ENCODE measurements at regions of chr5 and their contacts with region 1.

Region 1: DNA sequence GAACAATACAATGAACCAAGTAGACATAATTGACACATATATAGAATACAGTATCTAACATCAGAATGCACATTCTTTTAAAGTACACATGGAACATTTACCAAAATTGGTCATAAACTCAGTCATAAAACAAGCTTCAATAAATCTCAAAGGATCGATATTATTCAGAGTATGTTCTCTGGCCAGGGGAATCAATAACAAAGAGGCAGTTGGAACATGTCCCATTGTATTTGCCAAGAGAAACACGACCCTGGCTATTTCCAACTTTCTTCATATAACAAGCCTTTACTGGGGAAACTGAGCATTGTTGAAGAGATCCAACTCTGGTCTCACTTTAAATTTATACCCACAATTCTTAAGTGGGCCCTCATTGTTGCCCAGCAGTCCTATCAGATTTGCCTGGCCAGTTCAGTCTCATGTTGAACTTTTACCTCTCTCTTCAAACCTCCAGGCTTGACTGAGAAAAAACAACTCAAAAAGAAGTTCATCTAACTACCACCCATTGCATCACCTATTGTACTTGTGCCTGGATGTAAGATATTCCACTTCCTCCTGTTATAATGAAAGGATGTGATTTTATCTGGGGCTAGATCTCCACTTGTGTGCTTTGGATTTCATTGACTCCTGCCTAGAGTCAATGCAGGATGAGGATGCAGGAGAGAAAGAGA is 162.5 kb downstream of the HSPA4 start:
- DNase-seq: no peak
- H3K4me3 ChIP-seq: no peak overlapping the region
- H3K27ac ChIP-seq: no peak overlapping the region
- H3K4me1 ChIP-seq: no peaks in the 10 kb centered on the region
- H3K27me3 ChIP-seq: no peaks in the 10 kb centered on the region
- CTCF ChIP-seq: no peak

Region 2: DNA sequence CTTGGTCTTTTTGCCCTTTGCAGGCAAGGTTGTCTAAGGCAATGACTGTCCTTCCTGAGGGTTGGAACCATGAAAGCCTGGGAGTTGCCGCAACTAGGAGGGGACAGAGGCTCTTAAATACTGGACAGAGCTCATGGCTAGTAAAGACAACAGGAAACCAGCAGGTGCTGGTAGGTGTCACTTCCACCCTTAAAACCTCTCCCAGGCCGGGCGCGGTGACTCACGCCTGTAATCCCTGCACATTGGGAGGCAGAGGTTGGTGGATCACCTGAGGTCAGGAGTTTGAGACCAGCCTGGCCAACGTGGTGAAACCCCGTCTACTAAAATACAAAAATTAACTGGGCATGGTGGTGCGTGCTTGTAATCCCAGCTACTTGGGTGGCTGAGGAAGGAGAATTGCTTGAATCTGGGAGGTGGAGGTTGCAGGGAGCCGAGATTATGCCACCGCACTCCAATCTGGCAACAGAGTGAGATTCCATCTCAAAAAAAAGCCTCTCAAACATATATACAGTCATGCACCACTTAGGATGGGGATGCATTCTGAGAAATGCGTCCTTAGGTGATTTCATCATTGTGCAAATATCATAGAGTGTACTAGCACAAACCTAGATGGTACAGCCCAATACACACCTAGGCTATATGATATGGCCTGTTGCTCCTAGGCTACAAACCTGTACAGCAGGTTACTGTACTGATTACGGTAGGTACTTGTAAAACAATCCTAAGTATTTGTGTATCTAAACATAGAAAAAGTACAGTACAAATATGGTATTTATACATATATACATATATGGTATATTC is 59.8 kb before region 1 on chr5:
- CTCF ChIA-PET with region 1: no interaction called
- dilution Hi-C with region 1: loop called (anchors 5 kb)
- in situ Hi-C with region 1: no loop called
- intact Hi-C with region 1: no loop called
- DNase-seq: no peak
- H3K4me3 ChIP-seq: no peak overlapping the region
- H3K27ac ChIP-seq: no peak overlapping the region
- H3K4me1 ChIP-seq: no peaks in the 10 kb centered on the region
- H3K27me3 ChIP-seq: no peaks in the 10 kb centered on the region
- CTCF ChIP-seq: no peak

Measured in mammary epithelial cell (primary cell).